ENCODE measurements at regions of chr4 and their contacts with region 1.

Region 1: DNA sequence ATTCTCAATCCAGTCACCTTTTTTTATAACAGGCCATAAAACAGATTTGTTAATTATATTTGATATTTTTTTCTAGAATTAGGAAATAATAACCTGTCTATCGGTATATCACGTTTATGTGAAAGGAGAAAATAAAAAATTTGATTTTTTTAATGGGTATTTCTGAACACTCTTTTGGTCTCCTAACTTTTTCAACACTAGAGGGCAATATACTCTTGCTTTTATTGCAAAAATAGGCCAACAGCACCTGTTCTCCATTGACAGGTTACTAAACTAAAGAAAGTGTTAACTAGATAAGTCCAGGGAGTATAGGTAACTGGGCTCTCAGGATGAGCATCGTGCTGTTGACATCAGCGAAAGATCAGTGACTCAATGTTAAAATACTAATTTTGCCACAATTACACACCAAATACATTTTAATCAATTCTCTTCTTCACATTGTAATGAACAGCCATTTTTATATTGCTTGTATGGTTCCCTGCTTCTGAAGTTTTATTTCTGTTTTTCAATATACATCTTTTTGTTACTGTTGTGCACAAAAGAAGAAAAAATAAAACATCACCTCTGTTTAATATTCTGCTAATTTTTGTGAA is 22.8 kb downstream of the NDST4 start:
- DNase-seq: peak in 3 of 9 donors; percentile 1 to 4 (median 4)
- ATAC-seq: no peak
- H3K4me3 ChIP-seq: no peak overlapping the region
- H3K4me3 Mint-ChIP-seq: no peak overlapping the region
- H3K27ac ChIP-seq: no peak overlapping the region
- H3K27ac Mint-ChIP-seq: no peak overlapping the region
- H3K4me1 ChIP-seq: no peaks in the 10 kb centered on the region
- H3K4me1 Mint-ChIP-seq: no peaks in the 10 kb centered on the region
- H3K27me3 ChIP-seq: no peaks in the 10 kb centered on the region
- H3K27me3 Mint-ChIP-seq: no peaks in the 10 kb centered on the region

Region 2: DNA sequence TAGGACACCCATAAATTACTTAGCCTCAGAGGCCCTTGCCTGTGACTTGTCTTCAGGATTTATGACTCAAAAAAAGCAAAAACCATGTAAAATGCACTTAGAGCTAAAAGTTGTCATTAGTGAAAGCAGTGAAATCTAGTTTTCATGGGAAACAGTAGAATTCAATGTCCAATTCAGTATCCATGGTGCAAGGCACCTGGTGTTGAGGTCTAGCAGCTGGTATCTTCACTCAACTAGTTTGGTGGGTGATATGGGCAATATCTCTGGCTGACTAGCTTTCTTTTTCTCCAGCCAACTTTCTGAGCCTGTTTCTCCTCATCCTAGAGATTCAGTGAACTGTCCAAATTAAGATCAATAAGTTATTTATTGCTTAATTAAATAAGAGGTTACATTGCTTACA is 252.6 kb after region 1 on chr4:
- CTCF ChIA-PET with region 1: no interaction called
- POLR2A ChIA-PET with region 1: no interaction called
- intact Hi-C with region 1: no loop called
- DNase-seq: no peak
- ATAC-seq: no peak
- H3K4me3 ChIP-seq: no peak overlapping the region
- H3K4me3 Mint-ChIP-seq: no peak overlapping the region
- H3K27ac ChIP-seq: no peak overlapping the region
- H3K27ac Mint-ChIP-seq: no peak overlapping the region
- H3K4me1 ChIP-seq: no peaks in the 10 kb centered on the region
- H3K4me1 Mint-ChIP-seq: no peaks in the 10 kb centered on the region
- H3K27me3 ChIP-seq: no peaks in the 10 kb centered on the region
- H3K27me3 Mint-ChIP-seq: no peaks in the 10 kb centered on the region

Region 3: GRCh38 chr4:115537387-115537786 is 446.8 kb after region 1 on chr4:
- CTCF ChIA-PET with region 1: no interaction called
- POLR2A ChIA-PET with region 1: no interaction called
- intact Hi-C with region 1: loop called in 1 of 2 experiments (anchors 10 kb)
- DNase-seq: no peak
- ATAC-seq: no peak
- H3K4me3 ChIP-seq: no peak overlapping the region
- H3K4me3 Mint-ChIP-seq: no peak overlapping the region
- H3K27ac ChIP-seq: no peak overlapping the region
- H3K27ac Mint-ChIP-seq: no peak overlapping the region
- H3K4me1 ChIP-seq: no peaks in the 10 kb centered on the region
- H3K4me1 Mint-ChIP-seq: no peaks in the 10 kb centered on the region
- H3K27me3 ChIP-seq: no peaks in the 10 kb centered on the region
- H3K27me3 Mint-ChIP-seq: no peaks in the 10 kb centered on the region

Region 4: GRCh38 chr4:115851918-115852766 is 761.6 kb after region 1 on chr4:
- CTCF ChIA-PET with region 1: no interaction called
- POLR2A ChIA-PET with region 1: no interaction called
- intact Hi-C with region 1: loop called in 1 of 2 experiments (anchors 1 kb)
- DNase-seq: no peak
- ATAC-seq: no peak
- H3K4me3 ChIP-seq: no peak overlapping the region
- H3K4me3 Mint-ChIP-seq: no peak overlapping the region
- H3K27ac ChIP-seq: no peak overlapping the region
- H3K27ac Mint-ChIP-seq: no peak overlapping the region
- H3K4me1 ChIP-seq: no peaks in the 10 kb centered on the region
- H3K4me1 Mint-ChIP-seq: no peaks in the 10 kb centered on the region
- H3K27me3 ChIP-seq: no peaks in the 10 kb centered on the region
- H3K27me3 Mint-ChIP-seq: no peaks in the 10 kb centered on the region